ENCODE measurements at regions of chr1 and their contacts with region 1.

Region 1: DNA sequence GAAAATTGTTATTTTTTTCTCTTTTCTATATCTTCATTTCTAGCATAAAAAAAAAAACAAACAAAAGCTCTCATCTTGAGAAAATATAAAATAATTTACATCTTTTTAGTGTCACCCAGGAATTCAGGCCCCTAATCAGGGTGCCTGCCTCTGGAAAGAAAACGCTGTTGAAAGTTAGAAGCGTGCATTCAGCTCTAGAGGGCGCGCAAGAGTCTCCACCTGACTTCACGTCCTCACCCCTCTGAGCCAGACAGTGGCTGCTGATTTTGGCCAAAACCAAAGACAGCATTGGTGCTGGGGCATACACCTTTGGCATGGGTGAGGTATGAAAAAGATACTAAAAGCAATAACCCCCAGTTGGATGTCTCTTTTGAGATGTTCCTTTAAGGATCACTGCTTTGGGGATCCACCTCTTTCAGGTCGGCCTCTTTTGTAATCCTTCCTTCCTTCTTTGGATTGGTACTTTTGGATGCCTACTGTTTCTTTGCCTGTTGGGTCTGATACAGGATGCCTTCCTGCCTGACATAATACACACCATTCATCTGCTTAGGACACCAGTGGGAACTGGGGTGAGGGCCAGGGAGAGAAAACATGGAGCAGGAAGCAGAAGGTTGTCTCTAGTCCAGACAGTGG is 77.6 kb upstream of the CHRM3 start:
- DNase-seq: no peak
- H3K4me3 ChIP-seq: no peak overlapping the region
- H3K27ac ChIP-seq: no peak overlapping the region
- H3K4me1 ChIP-seq: no peaks in the 10 kb centered on the region
- H3K27me3 ChIP-seq: no peaks in the 10 kb centered on the region
- CTCF ChIP-seq: no peak

Region 2: GRCh38 chr1:239413916-239414315 is 105.1 kb after region 1 on chr1:
- intact Hi-C with region 1: no loop called
- DNase-seq: no peak
- H3K4me3 ChIP-seq: no peak overlapping the region
- H3K27ac ChIP-seq: no peak overlapping the region
- H3K4me1 ChIP-seq: no peaks in the 10 kb centered on the region
- H3K27me3 ChIP-seq: no peaks in the 10 kb centered on the region
- CTCF ChIP-seq: no peak

Region 3: DNA sequence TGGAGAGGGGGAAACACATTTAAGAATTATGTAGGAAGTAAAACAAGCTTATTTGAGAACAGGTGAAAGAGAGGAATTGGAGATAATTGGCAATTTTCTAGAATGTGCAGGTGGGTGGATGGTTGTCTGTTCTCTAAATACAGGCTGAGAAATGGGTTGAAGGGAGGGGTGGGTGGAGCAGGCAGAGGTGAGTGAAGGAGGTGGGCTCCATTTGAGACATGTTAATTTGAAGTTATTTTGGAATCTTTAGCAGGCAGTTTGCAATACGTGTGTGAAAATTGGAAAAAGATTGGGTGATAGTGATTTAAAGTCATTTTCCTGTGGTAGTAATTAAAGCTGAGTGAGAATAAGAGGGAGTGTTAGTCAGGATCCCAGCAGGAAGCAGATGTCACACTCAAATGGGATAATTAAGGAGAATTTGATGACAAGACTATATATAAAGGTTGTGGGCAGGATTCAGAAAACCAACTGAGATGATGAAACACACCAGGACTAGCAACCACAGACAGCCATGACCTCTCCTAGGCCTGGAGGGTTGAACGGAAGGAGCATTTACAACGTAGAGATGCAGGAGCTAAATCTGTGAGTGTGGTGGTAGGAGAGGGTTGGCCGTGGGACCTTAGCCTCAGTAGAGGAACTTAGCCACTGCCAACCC is 118.1 kb after region 1 on chr1:
- intact Hi-C with region 1: no loop called
- DNase-seq: no peak
- H3K4me3 ChIP-seq: no peak overlapping the region
- H3K27ac ChIP-seq: no peak overlapping the region
- H3K4me1 ChIP-seq: no peaks in the 10 kb centered on the region
- H3K27me3 ChIP-seq: no peaks in the 10 kb centered on the region
- CTCF ChIP-seq: no peak

Region 4: GRCh38 chr1:239879321-239880170 is 570.7 kb after region 1 on chr1:
- intact Hi-C with region 1: loop called (anchors 10 kb)
- DNase-seq: no peak
- H3K4me3 ChIP-seq: no peak overlapping the region
- H3K27ac ChIP-seq: no peak overlapping the region
- H3K4me1 ChIP-seq: no peaks in the 10 kb centered on the region
- H3K27me3 ChIP-seq: no peaks in the 10 kb centered on the region
- CTCF ChIP-seq: no peak

Region 5: DNA sequence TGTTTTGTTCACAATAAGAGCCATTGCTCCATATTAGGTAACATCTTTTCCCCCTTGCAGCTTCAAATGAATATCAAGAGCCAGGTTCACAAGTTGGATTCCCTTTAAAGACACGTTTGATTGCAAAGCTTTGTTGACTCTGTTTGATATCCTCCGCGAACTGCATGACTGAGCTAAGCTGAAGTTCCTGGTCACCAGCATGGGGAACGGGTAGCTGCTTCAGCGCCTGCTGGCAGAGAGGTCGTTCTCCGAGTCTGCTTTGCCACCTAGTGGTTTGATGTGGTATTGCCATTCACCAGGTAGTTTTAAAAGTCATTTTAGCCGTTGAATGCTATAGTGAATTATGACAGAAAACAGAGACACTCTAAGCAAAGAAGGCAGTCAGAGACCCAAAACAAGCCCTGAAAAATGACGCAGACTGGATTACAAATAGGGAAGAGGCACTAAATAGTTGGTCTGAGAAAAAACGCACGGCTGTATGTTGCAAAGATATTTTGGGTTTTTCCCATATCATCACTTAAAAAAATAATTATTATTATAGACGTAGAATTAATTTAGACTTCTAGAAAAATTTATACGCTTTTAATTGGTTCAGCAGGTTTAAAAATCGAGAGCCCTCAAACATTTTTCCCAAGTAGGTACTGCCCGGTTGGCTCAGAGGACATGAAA is 589.4 kb after region 1 on chr1:
- intact Hi-C with region 1: loop called (anchors 5 kb)
- DNase-seq: peak; percentile 69 to 71
- H3K4me3 ChIP-seq: peak overlapping the region in 1 of 2 donors; percentile 13
- H3K27ac ChIP-seq: no peak overlapping the region
- H3K4me1 ChIP-seq: peaks cover 0 to 8% (median 0%) of the 10 kb centered on the region in 4 donors
- H3K27me3 ChIP-seq: peaks cover 0 to 9% of the 10 kb centered on the region in 2 donors
- CTCF ChIP-seq: peak; percentile 90

Measured in tibial artery (tissue), 4 donors.